Activated CD4-positive, alpha-beta T cell treated with anti-CD3 and anti-CD28 coated beads, Interleukin-2, amount 10 ng/mL, durations not matched to agents 24 days and 14 days (primary cell): ENCODE measurements at regions of chr11 and their contacts with region 1.

Region 1: DNA sequence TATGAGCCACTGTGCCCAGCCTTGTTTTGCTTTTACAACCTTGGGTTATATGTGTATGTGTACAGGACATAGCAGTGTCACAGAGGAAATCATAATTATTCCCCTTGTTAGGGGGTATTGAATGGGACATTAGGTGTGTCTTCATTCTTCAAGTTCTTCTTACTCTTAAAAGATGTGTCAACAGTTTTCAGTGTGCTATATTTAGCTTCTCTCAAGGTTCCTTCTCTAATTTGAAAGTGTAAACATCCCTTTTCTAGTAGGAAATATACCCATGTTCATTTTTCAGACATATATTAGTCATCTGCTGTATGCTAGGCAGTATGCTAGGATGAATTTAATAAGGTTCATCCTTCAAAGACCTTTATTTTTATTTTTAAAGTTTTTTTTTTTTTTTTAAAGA is 17.1 kb downstream of the PCF11 start:
- DNase-seq: no peak
- H3K4me3 Mint-ChIP-seq: peak overlapping the region; percentile 12
- H3K27ac Mint-ChIP-seq: peak overlapping the region; percentile 52
- H3K4me1 Mint-ChIP-seq: peaks cover 46% of the 10 kb centered on the region
- H3K27me3 Mint-ChIP-seq: no peaks in the 10 kb centered on the region

Region 2: DNA sequence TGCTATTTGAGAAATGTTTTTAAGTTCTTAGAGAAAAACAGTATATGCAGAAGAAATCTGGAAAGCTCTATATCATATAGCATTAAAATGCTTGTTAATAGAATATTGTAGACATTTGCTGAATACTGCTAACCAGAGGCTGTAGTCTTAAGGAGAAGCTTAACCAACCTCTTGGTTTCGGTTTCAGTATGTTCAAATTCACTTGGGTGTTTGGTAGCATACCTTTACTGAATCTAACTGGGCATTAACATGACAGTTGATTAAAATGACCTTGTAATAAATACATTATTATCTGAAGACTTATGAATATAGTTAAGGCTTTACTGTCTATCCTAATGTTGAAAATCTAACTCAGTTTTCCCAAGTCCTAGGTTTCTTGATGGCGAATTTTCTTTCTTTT is 11.6 kb before region 1 on chr11:
- intact Hi-C with region 1: loop called (anchors 1 kb)
- DNase-seq: peak; percentile 62
- H3K4me3 Mint-ChIP-seq: peak overlapping the region; percentile 70
- H3K27ac Mint-ChIP-seq: peak overlapping the region; percentile 41
- H3K4me1 Mint-ChIP-seq: peaks cover 41% of the 10 kb centered on the region
- H3K27me3 Mint-ChIP-seq: no peaks in the 10 kb centered on the region

Region 3: GRCh38 chr11:83193315-83194280 is 19.6 kb after region 1 on chr11 and contains the start of gene ANKRD42:
- intact Hi-C with region 1: loop called (anchors 2 kb)
- DNase-seq: peak; percentile 96
- H3K4me3 Mint-ChIP-seq: peak within 1 kb of the TSS; percentile 95
- H3K27ac Mint-ChIP-seq: peak within 1 kb of the TSS; percentile 90
- H3K4me1 Mint-ChIP-seq: peaks cover 33% of the 10 kb centered on the region
- H3K27me3 Mint-ChIP-seq: no peaks in the 10 kb centered on the region
- total RNA-seq, gene ANKRD42: 4.0 and 4.1 TPM in 2 replicates